Left ventricle myocardium superior (tissue), 1 donor: ENCODE measurements at regions of chr14 and their contacts with region 1.

Region 1: GRCh38 chr14:22391912-22392421 is 197.1 kb downstream of the DAD1 start:
- DNase-seq: peak; percentile 51
- ATAC-seq: peak; percentile 83

Region 2: GRCh38 chr14:22052795-22053194 is 339.2 kb before region 1 on chr14:
- intact Hi-C with region 1: no loop called
- DNase-seq: no peak
- ATAC-seq: no peak

Region 3: DNA sequence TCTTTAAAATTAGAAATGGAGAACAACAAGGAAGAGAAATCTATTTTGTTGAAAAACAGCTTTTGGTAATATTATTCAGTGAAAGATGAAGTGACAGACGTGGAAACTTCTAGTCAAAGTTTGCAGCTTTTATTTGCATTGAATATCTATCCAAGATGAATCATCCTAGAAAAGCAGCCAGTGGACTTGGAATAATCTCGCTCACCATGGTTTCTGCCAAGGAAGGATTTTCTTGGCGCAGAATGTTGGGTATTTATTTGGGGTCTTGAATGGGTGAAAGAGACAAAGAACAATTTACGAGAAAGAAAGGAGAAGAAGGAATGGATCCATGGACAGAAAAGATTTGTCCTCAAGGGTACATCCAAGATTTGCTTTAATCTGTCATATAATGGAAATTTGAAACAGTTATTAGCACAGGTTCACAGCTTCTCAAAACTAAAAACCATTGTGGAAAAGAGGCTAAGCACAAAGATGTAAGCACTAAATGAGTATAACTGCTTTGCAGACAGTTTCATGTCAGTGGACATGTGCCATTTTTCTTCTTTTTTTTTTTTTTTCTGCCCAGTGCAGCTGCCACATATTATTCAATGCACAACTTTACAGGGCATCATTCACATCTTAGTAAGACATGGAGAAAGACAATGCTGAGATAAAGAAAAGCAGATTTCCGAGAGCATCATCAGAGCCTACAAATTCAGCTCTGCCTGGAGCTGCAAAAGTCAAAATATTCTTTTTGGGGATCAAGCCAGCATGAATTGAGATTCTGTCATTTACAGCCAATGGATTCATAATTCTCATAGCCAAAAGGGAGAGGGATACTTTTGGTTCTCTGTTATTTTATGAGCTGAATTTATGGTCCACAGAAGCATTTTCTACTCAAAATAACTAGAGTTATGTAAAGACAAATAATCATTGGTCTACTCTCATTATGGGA is 136.7 kb before region 1 on chr14:
- intact Hi-C with region 1: no loop called
- DNase-seq: no peak
- ATAC-seq: no peak

Region 4: GRCh38 chr14:22448905-22449599 is 57.1 kb after region 1 on chr14:
- intact Hi-C with region 1: no loop called
- DNase-seq: no peak
- ATAC-seq: peak; percentile 65

Region 5: GRCh38 chr14:22472935-22473854 is 81.2 kb after region 1 on chr14:
- intact Hi-C with region 1: loop called (anchors 5 kb)
- DNase-seq: no peak
- ATAC-seq: peak; percentile 57

Region 6: DNA sequence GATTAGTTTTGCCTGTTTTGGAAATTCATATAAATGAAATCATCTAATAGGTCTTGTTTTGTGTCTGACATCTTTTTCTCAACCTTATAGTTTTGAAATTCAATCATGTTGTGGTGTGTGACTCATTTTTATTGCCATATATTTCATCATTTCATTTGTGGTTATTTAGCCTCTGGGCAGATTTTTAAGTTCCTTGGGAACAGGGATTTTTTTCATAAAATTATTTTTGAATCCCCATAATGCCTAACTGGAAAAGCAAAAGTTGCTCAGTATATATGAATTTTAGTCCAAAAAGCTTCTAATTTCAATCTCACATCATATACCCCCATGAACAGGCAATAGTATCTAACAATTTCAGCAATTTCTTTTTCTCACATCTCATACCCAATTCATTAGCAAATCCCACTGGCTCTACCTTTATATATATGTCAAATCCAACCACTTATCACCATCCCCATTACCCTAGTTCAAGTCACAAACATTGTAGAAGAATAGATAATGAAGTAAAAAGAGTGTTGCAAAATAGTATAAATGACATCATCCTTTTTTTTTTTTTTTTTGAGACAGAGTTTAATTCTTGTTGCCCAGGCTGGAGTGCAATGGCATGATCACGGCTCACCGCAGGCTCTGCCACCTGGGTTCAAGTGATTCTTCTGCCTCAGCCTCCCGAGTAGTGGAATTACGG is 254.7 kb after region 1 on chr14:
- intact Hi-C with region 1: loop called (anchors 10 kb)
- DNase-seq: no peak
- ATAC-seq: no peak